Activated T-helper 1 cell treated with anti-CD3 and anti-CD28 coated beads, Interleukin-12 subunit alpha, Interleukin-12 subunit beta, Interleukin-2, Interleukin-4 antibody, amounts not matched to agents 30 ng/mL and 10 ng/mL and 1 ng/mL, durations not matched to agents 14 hours and 24 hours and 36 hours (primary cell): ENCODE measurements at regions of chr2 and their contacts with region 1.

Region 1: DNA sequence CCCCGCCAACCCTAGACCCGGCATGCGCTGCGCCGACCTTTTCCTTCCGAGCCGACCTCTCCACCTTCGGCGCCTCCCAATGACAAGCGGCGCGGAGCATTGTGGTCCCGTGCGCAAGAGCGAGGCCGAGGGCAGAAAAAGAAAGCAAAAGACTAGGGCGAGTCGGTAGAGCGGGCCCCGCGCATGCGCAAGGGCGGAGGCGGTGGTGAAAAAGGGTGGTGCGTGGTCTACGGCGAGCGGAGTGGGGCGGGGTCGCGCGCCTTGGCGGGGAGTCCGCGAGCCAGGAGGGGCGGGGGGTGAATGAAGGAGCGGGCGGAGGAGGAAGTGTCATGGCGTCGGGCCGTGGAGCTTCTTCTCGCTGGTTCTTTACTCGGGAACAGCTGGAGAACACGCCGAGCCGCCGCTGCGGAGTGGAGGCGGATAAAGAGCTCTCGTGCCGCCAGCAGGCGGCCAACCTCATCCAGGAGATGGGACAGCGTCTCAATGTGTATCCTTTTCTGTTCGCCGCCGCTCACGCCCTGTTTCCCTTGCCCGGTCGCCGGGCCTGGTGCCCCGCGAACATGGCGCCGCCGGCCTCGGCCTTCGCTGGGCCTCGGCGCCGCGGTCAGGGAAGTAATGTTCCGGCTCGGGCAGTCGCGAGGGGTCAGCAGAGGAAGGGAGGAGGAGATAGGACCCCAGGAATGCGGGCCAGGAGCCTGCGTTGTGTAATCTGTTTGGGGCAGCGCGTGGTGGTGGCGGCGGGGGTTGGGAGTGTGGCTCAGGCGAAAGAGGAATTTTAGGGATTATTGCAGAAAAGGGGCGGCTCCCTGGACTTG is at the start of gene CCNT2:
- DNase-seq: peak; percentile 100
- H3K4me3 Mint-ChIP-seq: peak within 1 kb of the TSS; percentile 96
- H3K27ac Mint-ChIP-seq: peak within 1 kb of the TSS; percentile 97
- H3K4me1 Mint-ChIP-seq: peaks cover 28% of the 10 kb centered on the region
- H3K27me3 Mint-ChIP-seq: peaks cover 11% of the 10 kb centered on the region
- total RNA-seq, gene CCNT2: 41.4 and 43.7 TPM in 2 replicates

Region 2: GRCh38 chr2:134683561-134684112 is 235.1 kb before region 1 on chr2:
- intact Hi-C with region 1: loop called (anchors 5 kb)
- DNase-seq: no peak
- H3K4me3 Mint-ChIP-seq: no peak overlapping the region
- H3K27ac Mint-ChIP-seq: no peak overlapping the region
- H3K4me1 Mint-ChIP-seq: peaks cover 53% of the 10 kb centered on the region
- H3K27me3 Mint-ChIP-seq: peaks cover 12% of the 10 kb centered on the region

Region 3: GRCh38 chr2:134943540-134943939 is 24.8 kb after region 1 on chr2:
- intact Hi-C with region 1: loop called (anchors 2 kb)
- DNase-seq: no peak
- H3K4me3 Mint-ChIP-seq: no peak overlapping the region
- H3K27ac Mint-ChIP-seq: no peak overlapping the region
- H3K4me1 Mint-ChIP-seq: peaks cover 24% of the 10 kb centered on the region
- H3K27me3 Mint-ChIP-seq: no peaks in the 10 kb centered on the region

Region 4: DNA sequence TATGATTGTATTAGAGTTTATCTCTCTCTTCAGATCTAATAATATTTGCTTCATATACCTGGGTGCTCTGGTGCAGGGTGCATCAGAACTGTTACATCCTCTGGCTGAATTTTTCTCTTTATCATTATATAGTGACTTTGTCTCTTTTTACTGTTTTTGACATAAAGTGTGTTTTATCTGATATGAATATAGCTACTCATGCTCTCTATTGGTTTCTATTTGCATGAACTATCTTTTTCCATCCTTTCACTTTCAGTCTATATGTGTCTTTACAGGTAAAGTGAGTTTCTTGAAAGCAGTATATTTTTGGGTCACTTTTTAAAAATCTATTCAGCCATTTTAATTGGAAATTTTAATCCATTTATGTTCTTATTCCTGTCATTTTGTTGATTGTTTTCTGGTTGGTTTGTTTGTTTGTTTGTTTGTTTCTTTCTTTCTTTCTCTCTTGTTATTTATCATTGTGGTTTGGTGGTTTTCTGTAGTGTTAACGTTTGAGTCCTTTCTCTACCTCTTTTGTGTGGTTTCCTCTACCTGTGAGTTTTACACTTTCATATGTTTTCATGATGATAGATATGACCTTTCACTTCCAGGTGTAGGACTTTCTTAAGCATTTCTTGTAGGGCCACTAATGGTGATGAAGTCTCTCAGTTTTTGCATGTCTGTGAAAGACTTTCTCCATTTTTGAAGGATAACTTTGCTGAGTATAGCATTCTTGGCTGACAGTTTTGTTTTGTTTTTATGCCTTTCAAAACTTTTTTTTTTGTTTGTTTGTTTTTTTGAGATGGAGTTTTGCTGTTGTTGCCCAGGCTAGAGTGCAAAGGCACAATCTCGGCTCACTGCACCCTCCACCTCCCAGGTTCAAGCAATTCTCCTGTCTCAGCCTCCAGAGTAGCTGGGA is 54.8 kb after region 1 on chr2:
- intact Hi-C with region 1: loop called (anchors 1 kb)
- DNase-seq: no peak
- H3K4me3 Mint-ChIP-seq: peak overlapping the region; percentile 0
- H3K27ac Mint-ChIP-seq: peak overlapping the region; percentile 54
- H3K4me1 Mint-ChIP-seq: peaks cover 15% of the 10 kb centered on the region
- H3K27me3 Mint-ChIP-seq: peaks cover 15% of the 10 kb centered on the region

Region 5: DNA sequence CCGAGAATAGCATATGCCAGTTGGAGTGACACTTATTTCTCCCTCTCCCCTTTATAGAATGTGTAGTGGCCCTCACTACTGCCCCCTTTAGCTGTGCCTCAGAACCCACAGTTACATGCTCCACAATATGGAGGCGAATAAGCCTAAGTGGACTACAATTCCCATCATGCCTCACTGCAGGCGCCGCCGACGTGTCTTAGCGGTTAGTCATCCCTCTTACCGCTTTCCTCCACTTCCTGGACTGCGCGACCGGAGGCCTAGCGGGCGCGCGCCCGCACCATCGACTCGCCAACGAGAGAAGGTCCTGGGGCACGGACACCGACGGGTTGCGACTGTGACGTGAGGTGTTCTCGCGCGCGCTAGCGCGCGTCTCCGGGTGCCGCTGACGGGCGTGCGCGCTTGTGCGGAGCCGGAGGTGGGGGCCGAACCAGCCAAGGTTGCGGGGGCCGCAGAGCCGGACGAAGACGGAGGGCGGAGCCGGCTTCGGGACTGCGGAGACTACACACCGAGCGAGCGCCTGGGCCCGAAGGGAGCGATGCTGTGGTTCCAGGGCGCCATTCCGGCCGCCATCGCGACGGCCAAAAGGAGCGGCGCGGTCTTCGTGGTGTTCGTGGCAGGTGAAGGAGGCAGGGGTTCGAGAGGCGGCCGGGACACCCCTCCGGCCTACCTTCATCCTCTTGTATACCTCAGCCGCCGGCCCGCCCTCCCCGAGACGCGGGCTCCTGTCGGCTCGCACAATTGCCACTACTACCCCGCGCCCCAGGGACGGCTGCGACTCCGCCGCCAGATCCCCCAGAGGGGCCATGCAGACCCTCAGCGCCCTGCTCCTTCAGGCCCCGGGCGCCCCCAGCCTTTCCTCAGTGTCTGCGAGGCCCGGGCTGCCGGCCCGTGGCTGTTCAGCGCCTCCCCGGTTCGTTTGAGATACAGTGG is 822.9 kb after region 1 on chr2 and contains the start of gene UBXN4:
- intact Hi-C with region 1: loop called (anchors 1 kb)
- DNase-seq: peak; percentile 89
- H3K4me3 Mint-ChIP-seq: peak within 1 kb of the TSS; percentile 99
- H3K27ac Mint-ChIP-seq: peak within 1 kb of the TSS; percentile 100
- H3K4me1 Mint-ChIP-seq: peaks cover 36% of the 10 kb centered on the region
- H3K27me3 Mint-ChIP-seq: no peaks in the 10 kb centered on the region
- total RNA-seq, gene UBXN4: 115 and 121 TPM in 2 replicates

Region 6: GRCh38 chr2:135876066-135876711 is 957.5 kb after region 1 on chr2 and contains the start of gene MCM6:
- intact Hi-C with region 1: loop called (anchors 1 kb)
- DNase-seq: peak; percentile 99
- H3K4me3 Mint-ChIP-seq: peak within 1 kb of the TSS; percentile 98
- H3K27ac Mint-ChIP-seq: peak within 1 kb of the TSS; percentile 99
- H3K4me1 Mint-ChIP-seq: peaks cover 45% of the 10 kb centered on the region
- H3K27me3 Mint-ChIP-seq: peaks cover 2% of the 10 kb centered on the region
- total RNA-seq, gene MCM6: 176 and 177 TPM in 2 replicates